ENCODE measurements at regions of chr13 and their contacts with region 1.

Region 1: GRCh38 chr13:37476874-37477273 is 121.7 kb downstream of the POSTN start:
- DNase-seq: peak; percentile 83
- ATAC-seq: peak; percentile 81
- H3K4me3 ChIP-seq: no peak overlapping the region
- H3K27ac ChIP-seq: peak overlapping the region; percentile 69
- H3K4me1 ChIP-seq: peaks cover 6% of the 10 kb centered on the region
- H3K27me3 ChIP-seq: no peaks in the 10 kb centered on the region
- CTCF ChIP-seq: no peak
- POLR2A ChIP-seq: no peak
- RAD21 ChIP-seq: no peak

Region 2: DNA sequence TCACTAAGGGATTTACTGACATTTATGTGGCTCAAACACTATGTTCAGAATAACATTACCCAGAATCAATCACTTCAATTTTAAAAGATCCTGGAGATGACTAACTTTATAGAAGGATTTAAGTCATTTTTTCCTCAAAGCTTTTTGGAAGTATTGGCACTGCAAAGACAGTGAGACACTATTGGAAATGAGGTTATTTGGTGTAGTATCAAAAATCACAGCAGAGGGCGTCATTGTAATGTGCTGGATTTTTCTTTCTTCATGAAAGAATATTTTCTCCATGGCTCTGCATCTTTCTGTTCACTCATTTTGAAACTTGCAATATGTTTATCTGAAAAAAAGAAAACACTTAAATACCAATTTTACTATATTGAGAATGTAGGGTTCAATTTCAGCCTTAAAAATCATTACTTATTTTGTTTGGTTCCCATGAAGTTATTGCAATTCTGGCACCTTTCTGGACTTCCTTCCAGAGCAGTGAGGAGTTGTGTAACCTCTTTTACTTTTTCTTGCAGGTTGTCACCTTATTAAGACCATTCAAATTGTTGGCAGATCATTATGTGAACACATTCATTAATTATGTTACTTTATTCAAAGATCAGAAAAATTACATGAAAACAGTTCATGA is 367.7 kb before region 1 on chr13:
- CTCF ChIA-PET with region 1: interaction called, 4 read pairs
- POLR2A ChIA-PET with region 1: no interaction called
- dilution Hi-C with region 1: no loop called
- in situ Hi-C with region 1: no loop called
- intact Hi-C with region 1: loop called (anchors 5 kb)
- DNase-seq: peak; percentile 62
- ATAC-seq: peak; percentile 67
- H3K4me3 ChIP-seq: no peak overlapping the region
- H3K27ac ChIP-seq: no peak overlapping the region
- H3K4me1 ChIP-seq: no peaks in the 10 kb centered on the region
- H3K27me3 ChIP-seq: no peaks in the 10 kb centered on the region
- CTCF ChIP-seq: peak; percentile 89
- POLR2A ChIP-seq: 0 out of 2 replicates have a peak, but pooled peaks have one; percentile 56
- RAD21 ChIP-seq: peak; percentile 96

Region 3: GRCh38 chr13:37490176-37490779 is 13.4 kb after region 1 on chr13:
- CTCF ChIA-PET with region 1: no interaction called
- POLR2A ChIA-PET with region 1: no interaction called
- dilution Hi-C with region 1: no loop called
- in situ Hi-C with region 1: no loop called
- intact Hi-C with region 1: loop called (anchors 1 kb)
- DNase-seq: peak; percentile 14
- ATAC-seq: no peak
- H3K4me3 ChIP-seq: no peak overlapping the region
- H3K27ac ChIP-seq: no peak overlapping the region
- H3K4me1 ChIP-seq: peaks cover 4% of the 10 kb centered on the region; the same call in 1 of the 2 replicates
- H3K27me3 ChIP-seq: no peaks in the 10 kb centered on the region
- CTCF ChIP-seq: no peak
- POLR2A ChIP-seq: no peak
- RAD21 ChIP-seq: no peak